A673 (cell line): ENCODE measurements at regions of chr11 and their contacts with region 1.

Region 1: DNA sequence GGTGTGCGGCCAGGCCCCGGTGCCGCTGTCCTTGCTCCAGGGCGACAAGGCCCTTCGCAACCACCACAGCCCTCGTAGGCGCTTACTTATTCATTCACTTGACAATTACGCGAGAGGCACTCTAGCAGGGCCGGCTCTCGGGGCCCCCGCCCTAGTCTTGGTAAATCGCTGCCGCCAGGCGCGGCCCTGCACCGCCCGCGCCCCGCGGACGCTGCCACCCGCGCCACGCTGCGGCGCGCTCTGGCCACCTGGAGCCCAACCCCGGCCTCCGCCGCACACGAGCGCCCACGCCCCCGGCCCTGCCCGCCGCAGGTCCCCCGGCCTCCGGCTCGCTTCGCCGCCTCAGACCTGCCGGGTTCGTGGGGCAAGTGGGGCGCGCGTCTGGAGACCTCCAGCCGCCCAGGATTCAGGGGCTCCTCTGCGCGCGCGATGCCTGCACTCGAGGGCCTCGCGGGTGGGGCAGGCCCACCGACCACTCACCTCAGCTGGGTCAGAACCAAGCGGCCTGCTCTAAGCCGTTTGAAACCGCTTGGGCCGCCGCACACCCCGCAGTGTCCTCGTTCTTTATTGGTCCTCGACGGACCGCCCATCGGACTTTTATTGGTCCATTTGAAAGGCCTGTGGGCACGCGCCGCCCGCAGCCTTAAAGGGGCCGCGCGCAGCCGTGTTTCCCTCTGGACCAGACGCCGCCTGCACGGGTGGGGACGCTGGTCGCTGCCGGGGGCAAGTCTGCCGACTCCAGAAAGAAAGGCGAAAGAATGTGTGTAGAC is at the start of gene CKAP5:
- DNase-seq: peak; percentile 99
- H3K4me3 ChIP-seq: peak within 1 kb of the TSS; percentile 74
- H3K27ac ChIP-seq: peak within 1 kb of the TSS; percentile 92
- H3K4me1 ChIP-seq: peaks cover 15% of the 10 kb centered on the region
- H3K27me3 ChIP-seq: no peaks in the 10 kb centered on the region
- CTCF ChIP-seq: 0 out of 2 replicates have a peak, but pooled peaks have one; percentile 3
- total RNA-seq, gene CKAP5: 572 and 581 TPM in 2 replicates

Region 2: GRCh38 chr11:46916286-46917108 is 70.6 kb after region 1 on chr11:
- CTCF ChIA-PET with region 1: no interaction called
- POLR2A ChIA-PET with region 1: no interaction called
- intact Hi-C with region 1: loop called (anchors 2 kb)
- DNase-seq: peak; percentile 96
- H3K4me3 ChIP-seq: peak overlapping the region; percentile 71
- H3K27ac ChIP-seq: peak overlapping the region; percentile 60
- H3K4me1 ChIP-seq: peaks cover 47% of the 10 kb centered on the region
- H3K27me3 ChIP-seq: no peaks in the 10 kb centered on the region
- CTCF ChIP-seq: peak; percentile 69

Region 3: DNA sequence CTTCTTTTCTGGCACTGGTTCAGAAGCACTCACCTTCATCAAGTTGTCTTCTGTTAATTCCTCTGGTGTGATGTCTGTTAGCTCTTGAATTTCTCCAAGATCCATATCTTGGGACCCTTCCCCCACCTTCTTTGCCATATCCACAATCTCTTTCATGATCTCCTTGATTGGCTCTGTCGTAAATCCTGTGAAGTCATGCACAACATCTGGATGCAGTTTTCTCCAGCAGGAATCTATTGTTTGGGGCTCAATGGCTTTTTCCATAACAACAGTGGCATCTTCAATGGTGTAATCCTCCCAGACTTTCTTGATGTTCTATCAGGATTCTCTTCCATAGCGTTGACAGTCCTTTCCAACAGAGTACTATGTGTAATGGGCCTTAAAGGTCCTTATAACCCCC is 187.5 kb after region 1 on chr11:
- CTCF ChIA-PET with region 1: no interaction called
- POLR2A ChIA-PET with region 1: interaction called, 13 read pairs
- intact Hi-C with region 1: no loop called
- DNase-seq: peak; percentile 88
- H3K4me3 ChIP-seq: no peak overlapping the region
- H3K27ac ChIP-seq: peak overlapping the region; percentile 12
- H3K4me1 ChIP-seq: peaks cover 18% of the 10 kb centered on the region
- H3K27me3 ChIP-seq: no peaks in the 10 kb centered on the region
- CTCF ChIP-seq: no peak